BJ (cell line): ENCODE measurements at regions of chr5 and their contacts with region 1.

Region 1: GRCh38 chr5:180605554-180606214 is 14.4 kb upstream of the SCGB3A1 start:
- DNase-seq: no peak
- H3K4me3 ChIP-seq: no peak overlapping the region
- H3K27me3 ChIP-seq: no peaks in the 10 kb centered on the region
- CTCF ChIP-seq: peak; percentile 78

Region 2: GRCh38 chr5:180631509-180632395 is 26.1 kb after region 1 on chr5:
- CTCF ChIA-PET with region 1: interaction called, 12 read pairs
- POLR2A ChIA-PET with region 1: no interaction called
- DNase-seq: no peak
- H3K4me3 ChIP-seq: no peak overlapping the region
- H3K27me3 ChIP-seq: no peaks in the 10 kb centered on the region
- CTCF ChIP-seq: no peak